AG04450 (cell line): ENCODE measurements at regions of chr19 and their contacts with region 1.

Region 1: DNA sequence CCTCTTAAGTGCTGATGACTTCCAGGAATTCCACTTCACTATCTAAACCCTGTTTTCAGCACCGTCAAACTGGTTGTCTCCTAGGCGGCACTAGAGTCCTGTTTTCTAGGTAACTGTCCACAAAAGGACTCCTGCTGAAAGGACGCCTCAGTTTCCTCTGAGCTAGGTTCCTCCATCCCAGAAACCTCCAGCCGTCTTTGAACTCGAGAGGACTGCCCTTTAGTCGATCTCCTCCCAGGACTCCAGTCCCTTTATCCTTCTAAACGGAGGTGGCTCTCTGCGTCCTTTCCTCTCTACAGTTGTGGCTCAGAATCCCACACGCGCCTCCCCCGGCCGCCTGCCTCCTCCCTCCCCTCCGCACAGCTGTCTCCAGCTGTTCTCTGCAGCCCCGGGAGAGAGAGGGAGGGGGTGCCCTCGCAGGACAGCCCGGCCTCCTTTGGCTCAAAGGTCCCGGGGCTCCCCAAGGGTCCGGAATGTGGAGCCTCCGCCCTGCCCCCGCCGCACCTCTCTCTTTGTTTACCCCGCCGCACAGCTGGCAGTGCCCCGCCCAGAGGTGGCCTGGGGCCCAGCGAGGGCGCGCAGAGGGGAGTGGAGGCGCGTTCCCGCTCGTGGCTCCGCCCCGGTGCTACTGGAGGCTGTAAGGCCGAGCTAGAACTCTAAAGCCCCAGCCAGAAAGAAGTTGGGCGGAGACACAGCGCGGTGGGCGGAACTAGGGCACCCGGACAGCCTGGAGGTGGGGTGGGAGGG is 2.4 kb downstream of the LTBP4 start:
- DNase-seq: peak; percentile 92
- H3K4me3 ChIP-seq: peak overlapping the region; percentile 69
- H3K27ac ChIP-seq: peak overlapping the region; percentile 93
- H3K27me3 ChIP-seq: no peaks in the 10 kb centered on the region
- CTCF ChIP-seq: no peak

Region 2: DNA sequence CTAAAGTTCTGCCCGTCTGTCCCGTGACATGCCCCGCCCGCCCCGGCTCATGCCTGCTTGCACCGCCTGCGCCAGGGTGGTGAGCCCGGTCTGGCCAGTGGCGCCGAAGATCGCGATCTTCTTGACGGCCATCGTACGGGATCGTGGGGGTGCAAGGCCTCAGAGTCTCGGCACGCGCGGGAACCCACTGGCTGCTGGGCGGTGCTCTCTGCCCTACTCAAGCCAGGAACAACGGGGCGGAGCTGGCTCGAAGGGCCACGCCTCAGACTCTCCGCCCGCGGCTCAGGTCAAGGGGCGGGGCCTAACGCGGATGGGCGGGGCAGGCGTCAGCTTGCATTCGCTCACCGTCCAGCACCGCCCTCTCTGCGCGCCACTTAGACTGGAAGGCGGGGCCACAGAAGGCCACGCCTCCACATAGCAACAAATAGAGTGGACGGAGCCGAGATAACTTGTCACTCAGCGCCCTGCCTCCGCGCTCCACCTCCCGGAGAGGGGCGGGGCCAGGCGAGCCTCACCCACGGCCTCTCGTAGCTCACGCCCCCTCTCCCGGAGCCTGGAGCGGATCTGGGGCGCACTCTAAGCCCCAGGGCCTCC is 137.9 kb before region 1 on chr19 and contains the start of gene BLVRB:
- CTCF ChIA-PET with region 1: interaction called, 34 read pairs
- POLR2A ChIA-PET with region 1: no interaction called
- DNase-seq: peak; percentile 99
- H3K4me3 ChIP-seq: peak within 1 kb of the TSS; percentile 74
- H3K27ac ChIP-seq: peak within 1 kb of the TSS; percentile 71
- H3K27me3 ChIP-seq: peaks cover 11% of the 10 kb centered on the region
- CTCF ChIP-seq: no peak
- polyA plus RNA-seq, gene BLVRB: 40.4 and 58.0 TPM in 2 replicates

Region 3: DNA sequence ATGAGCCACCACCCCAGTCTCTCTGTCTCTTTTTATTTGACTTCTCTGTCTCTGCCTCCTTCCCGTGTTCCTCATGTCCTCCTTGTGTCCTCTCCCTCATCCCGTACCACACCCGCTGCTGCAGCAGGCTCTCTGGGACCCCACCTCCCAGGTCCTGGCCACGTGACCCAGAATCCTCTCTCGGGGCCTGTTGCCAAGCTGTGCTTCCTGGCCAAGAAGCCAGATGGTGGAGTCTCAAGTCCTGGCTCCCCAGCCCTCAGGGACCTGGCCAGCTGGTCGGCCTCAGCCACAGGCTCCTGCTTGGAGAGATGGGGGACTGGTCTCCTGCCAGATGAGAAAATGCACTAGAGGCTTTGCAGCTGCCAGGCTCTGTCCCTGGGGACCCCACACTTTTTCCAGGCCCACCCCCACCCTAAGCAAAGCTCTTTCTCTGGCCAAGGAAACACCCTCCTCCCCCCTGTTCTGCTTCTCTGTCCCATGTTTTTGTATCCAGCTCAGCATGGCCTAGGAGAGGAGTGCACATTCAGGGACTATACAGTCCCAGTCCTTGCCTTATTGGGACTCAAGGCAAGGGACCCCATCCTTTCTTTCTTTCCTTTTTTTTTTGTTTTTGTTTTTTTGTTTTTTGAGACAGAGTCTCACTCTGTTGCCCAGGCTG is 61.2 kb before region 1 on chr19:
- CTCF ChIA-PET with region 1: interaction called, 19 read pairs
- POLR2A ChIA-PET with region 1: interaction called, 13 read pairs
- DNase-seq: peak; percentile 61
- H3K4me3 ChIP-seq: no peak overlapping the region
- H3K27ac ChIP-seq: no peak overlapping the region
- H3K27me3 ChIP-seq: peaks cover 6% of the 10 kb centered on the region
- CTCF ChIP-seq: no peak

Region 4: GRCh38 chr19:40613640-40614303 is 10.2 kb after region 1 on chr19:
- CTCF ChIA-PET with region 1: interaction called, 4 read pairs
- POLR2A ChIA-PET with region 1: interaction called, 36 read pairs
- DNase-seq: peak; percentile 67
- H3K4me3 ChIP-seq: peak overlapping the region; percentile 88
- H3K27ac ChIP-seq: peak overlapping the region; percentile 95
- H3K27me3 ChIP-seq: no peaks in the 10 kb centered on the region
- CTCF ChIP-seq: no peak